ENCODE measurements at regions of chr2 and their contacts with region 1.

Region 1: DNA sequence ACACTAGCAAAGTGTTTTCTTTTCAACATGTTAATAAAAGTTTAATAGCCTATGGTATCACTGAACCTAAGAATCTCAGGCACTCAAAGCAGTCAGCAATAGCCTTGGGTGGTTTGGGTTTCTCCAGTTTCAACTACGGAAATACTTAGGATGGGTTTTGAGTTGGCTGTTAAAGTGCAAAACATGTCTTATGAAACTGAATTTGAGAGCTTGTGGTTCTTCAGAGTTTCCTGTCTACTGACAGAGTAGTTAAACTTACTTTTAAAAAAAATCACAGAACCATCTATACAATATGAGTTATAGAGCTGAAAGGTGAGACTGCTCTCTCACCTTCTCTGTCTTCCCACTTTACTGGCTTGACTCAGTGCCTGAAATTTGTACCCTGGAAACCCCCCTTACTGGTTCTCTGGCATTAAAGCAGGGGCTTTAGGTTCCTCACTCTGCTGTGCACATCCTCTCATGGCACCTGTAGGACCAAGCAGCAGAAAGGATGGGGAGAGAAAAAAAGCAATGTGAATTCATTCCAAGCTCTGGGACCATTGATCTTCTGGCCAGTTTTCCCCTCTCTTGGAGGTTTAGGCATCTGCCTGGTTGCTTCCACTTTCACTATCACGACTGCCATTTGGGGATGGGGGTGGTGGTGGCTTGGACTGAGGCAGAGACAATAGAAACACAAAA is 18.1 kb downstream of the CCDC141 start:
- DNase-seq: peak; percentile 50
- ATAC-seq: peak; percentile 89
- H3K4me3 Mint-ChIP-seq: peak overlapping the region; percentile 76
- H3K27ac Mint-ChIP-seq: peak overlapping the region; percentile 97
- H3K4me1 Mint-ChIP-seq: peaks cover 41% of the 10 kb centered on the region
- H3K27me3 Mint-ChIP-seq: no peaks in the 10 kb centered on the region

Region 2: GRCh38 chr2:179044500-179044899 is 12.6 kb after region 1 on chr2:
- CTCF ChIA-PET with region 1: interaction called, 11 read pairs
- POLR2A ChIA-PET with region 1: interaction called, 20 read pairs
- DNase-seq: no peak
- ATAC-seq: no peak
- H3K4me3 Mint-ChIP-seq: no peak overlapping the region
- H3K27ac Mint-ChIP-seq: peak overlapping the region; percentile 53
- H3K4me1 Mint-ChIP-seq: peaks cover 51% of the 10 kb centered on the region
- H3K27me3 Mint-ChIP-seq: no peaks in the 10 kb centered on the region

Region 3: GRCh38 chr2:179049546-179050311 is 17.9 kb after region 1 on chr2 and contains the start of gene CCDC141:
- CTCF ChIA-PET with region 1: interaction called, 7 read pairs
- POLR2A ChIA-PET with region 1: interaction called, 20 read pairs
- DNase-seq: peak; percentile 59
- ATAC-seq: peak; percentile 80
- H3K4me3 Mint-ChIP-seq: peak within 1 kb of the TSS; percentile 85
- H3K27ac Mint-ChIP-seq: peak within 1 kb of the TSS; percentile 93
- H3K4me1 Mint-ChIP-seq: peaks cover 60% of the 10 kb centered on the region
- H3K27me3 Mint-ChIP-seq: no peaks in the 10 kb centered on the region
- total RNA-seq, gene CCDC141: 17.0 to 19.5 TPM

Measured in activated CD8-positive, alpha-beta T cell treated with anti-CD3 and anti-CD28 coated beads, Interleukin-2, amount 10 ng/mL, durations not matched to agents 7 days and 5 days (primary cell).